CD8-positive, alpha-beta T cell (primary cell): ENCODE measurements at regions of chr14 and their contacts with region 1.

Region 1: GRCh38 chr14:80850197-80850814 is 91.2 kb downstream of the CEP128 start:
- DNase-seq: peak in 2 of 9 experiments; percentile 24 to 42
- ATAC-seq: no peak
- H3K4me3 ChIP-seq: no peak overlapping the region
- H3K4me3 Mint-ChIP-seq: no peak overlapping the region
- H3K27ac ChIP-seq: no peak overlapping the region
- H3K27ac Mint-ChIP-seq: no peak overlapping the region
- H3K4me1 ChIP-seq: no peaks in the 10 kb centered on the region
- H3K4me1 Mint-ChIP-seq: no peaks in the 10 kb centered on the region
- H3K27me3 ChIP-seq: no peaks in the 10 kb centered on the region
- H3K27me3 Mint-ChIP-seq: no peaks in the 10 kb centered on the region
- CTCF ChIP-seq: peak; percentile 70

Region 2: GRCh38 chr14:78959674-78960264 is 1890.5 kb before region 1 on chr14:
- CTCF ChIA-PET with region 1: no interaction called
- POLR2A ChIA-PET with region 1: no interaction called
- intact Hi-C with region 1: loop called in 1 of 2 experiments (anchors 2 kb)
- DNase-seq: peak in 8 of 9 experiments; percentile 11 to 55 (median 32)
- ATAC-seq: no peak
- H3K4me3 ChIP-seq: no peak overlapping the region
- H3K4me3 Mint-ChIP-seq: no peak overlapping the region
- H3K27ac ChIP-seq: no peak overlapping the region
- H3K27ac Mint-ChIP-seq: no peak overlapping the region
- H3K4me1 ChIP-seq: no peaks in the 10 kb centered on the region
- H3K4me1 Mint-ChIP-seq: no peaks in the 10 kb centered on the region
- H3K27me3 ChIP-seq: no peaks in the 10 kb centered on the region
- H3K27me3 Mint-ChIP-seq: peaks cover 6% of the 10 kb centered on the region
- CTCF ChIP-seq: peak; percentile 69

Region 3: GRCh38 chr14:78968265-78968664 is 1882.0 kb before region 1 on chr14:
- CTCF ChIA-PET with region 1: no interaction called
- POLR2A ChIA-PET with region 1: no interaction called
- intact Hi-C with region 1: loop called in 1 of 2 experiments (anchors 2 kb)
- DNase-seq: no peak
- ATAC-seq: no peak
- H3K4me3 ChIP-seq: no peak overlapping the region
- H3K4me3 Mint-ChIP-seq: no peak overlapping the region
- H3K27ac ChIP-seq: no peak overlapping the region
- H3K27ac Mint-ChIP-seq: no peak overlapping the region
- H3K4me1 ChIP-seq: no peaks in the 10 kb centered on the region
- H3K4me1 Mint-ChIP-seq: no peaks in the 10 kb centered on the region
- H3K27me3 ChIP-seq: no peaks in the 10 kb centered on the region
- H3K27me3 Mint-ChIP-seq: peaks cover 6% of the 10 kb centered on the region
- CTCF ChIP-seq: no peak

Region 4: GRCh38 chr14:80901260-80901659 is 51.0 kb after region 1 on chr14:
- CTCF ChIA-PET with region 1: no interaction called
- POLR2A ChIA-PET with region 1: no interaction called
- intact Hi-C with region 1: no loop called
- DNase-seq: no peak
- ATAC-seq: no peak
- H3K4me3 ChIP-seq: no peak overlapping the region
- H3K4me3 Mint-ChIP-seq: no peak overlapping the region
- H3K27ac ChIP-seq: no peak overlapping the region
- H3K27ac Mint-ChIP-seq: no peak overlapping the region
- H3K4me1 ChIP-seq: no peaks in the 10 kb centered on the region
- H3K4me1 Mint-ChIP-seq: no peaks in the 10 kb centered on the region
- H3K27me3 ChIP-seq: no peaks in the 10 kb centered on the region
- H3K27me3 Mint-ChIP-seq: no peaks in the 10 kb centered on the region
- CTCF ChIP-seq: no peak

Region 5: GRCh38 chr14:81211844-81212243 is 361.5 kb after region 1 on chr14:
- CTCF ChIA-PET with region 1: no interaction called
- POLR2A ChIA-PET with region 1: no interaction called
- intact Hi-C with region 1: no loop called
- DNase-seq: peak in 5 of 9 experiments; percentile 19 to 61 (median 33)
- ATAC-seq: peak; percentile 84
- H3K4me3 ChIP-seq: no peak overlapping the region
- H3K4me3 Mint-ChIP-seq: no peak overlapping the region
- H3K27ac ChIP-seq: no peak overlapping the region
- H3K27ac Mint-ChIP-seq: peak overlapping the region; percentile 16
- H3K4me1 ChIP-seq: peaks cover 13% of the 10 kb centered on the region
- H3K4me1 Mint-ChIP-seq: peaks cover 60% of the 10 kb centered on the region
- H3K27me3 ChIP-seq: no peaks in the 10 kb centered on the region
- H3K27me3 Mint-ChIP-seq: no peaks in the 10 kb centered on the region
- CTCF ChIP-seq: peak; percentile 38